H1 (cell line): ENCODE measurements at regions of chr5 and their contacts with region 1.

Region 1: DNA sequence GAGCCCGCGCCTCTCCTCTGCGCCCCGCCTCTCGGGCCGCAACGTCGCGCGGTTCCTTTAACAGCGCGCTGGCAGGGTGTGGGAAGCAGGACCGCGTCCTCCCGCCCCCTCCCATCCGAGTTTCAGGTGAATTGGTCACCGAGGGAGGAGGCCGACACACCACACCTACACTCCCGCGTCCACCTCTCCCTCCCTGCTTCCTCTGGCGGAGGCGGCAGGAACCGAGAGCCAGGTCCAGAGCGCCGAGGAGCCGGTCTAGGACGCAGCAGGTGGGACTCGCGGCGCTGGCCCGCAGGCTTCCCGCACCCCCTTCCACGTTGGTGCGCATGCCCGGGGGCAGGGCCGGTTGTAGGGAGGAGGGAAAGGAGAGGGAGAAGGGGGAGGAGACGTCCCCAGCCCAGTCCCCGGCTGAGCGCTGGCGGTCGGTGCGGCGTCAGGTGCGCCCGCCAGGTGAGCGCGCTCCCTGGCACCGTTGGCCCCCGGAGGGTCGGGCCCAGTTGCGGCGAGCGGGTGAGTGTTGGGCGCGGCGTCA is at the start of gene OCLN:
- DNase-seq: peak; percentile 74 to 92
- H3K4me3 ChIP-seq: peak within 1 kb of the TSS; percentile 82 to 96 (median 92)
- H3K27ac ChIP-seq: peak within 1 kb of the TSS; percentile 93
- H3K4me1 ChIP-seq: peaks cover 0 to 9% (median 6%) of the 10 kb centered on the region in 4 experiments; a peak in 4 of 7 replicates
- H3K27me3 ChIP-seq: no peaks in the 10 kb centered on the region
- CTCF ChIP-seq: no peak
- EP300 ChIP-seq: 0 out of 3 replicates have a peak, but pooled peaks of 1 of the 2 experiments have one; percentile 6
- POLR2A ChIP-seq: peak; percentile 54 to 91
- RAD21 ChIP-seq: peak in 1 of 2 experiments; percentile 3; a peak in 1 of 4 replicates
- total RNA-seq, gene OCLN: 76.3 and 85.5 TPM in 2 replicates

Region 2: GRCh38 chr5:69467442-69468225 is 24.8 kb before region 1 on chr5:
- CTCF ChIA-PET with region 1: no interaction called
- POLR2A ChIA-PET with region 1: interaction called, 10 read pairs
- DNase-seq: no peak
- H3K4me3 ChIP-seq: no peak overlapping the region
- H3K27ac ChIP-seq: no peak overlapping the region
- H3K4me1 ChIP-seq: no peaks in the 10 kb centered on the region
- H3K27me3 ChIP-seq: no peaks in the 10 kb centered on the region
- CTCF ChIP-seq: no peak
- EP300 ChIP-seq: no peak
- POLR2A ChIP-seq: no peak
- RAD21 ChIP-seq: no peak